ENCODE measurements at regions of chr7 and their contacts with region 1.

Region 1: GRCh38 chr7:157555313-157555712 is 218.5 kb downstream of the DNAJB6 start:
- DNase-seq: peak; percentile 94
- ATAC-seq: peak; percentile 97
- H3K4me3 ChIP-seq: peak overlapping the region; percentile 43; the same call in 1 of the 2 replicates
- H3K27ac ChIP-seq: peak overlapping the region; percentile 100
- H3K4me1 ChIP-seq: peaks cover 31% of the 10 kb centered on the region
- H3K27me3 ChIP-seq: no peaks in the 10 kb centered on the region
- CTCF ChIP-seq: no peak

Region 2: GRCh38 chr7:157432957-157433576 is 122.2 kb before region 1 on chr7:
- CTCF ChIA-PET with region 1: interaction called, 4 read pairs
- POLR2A ChIA-PET with region 1: interaction called, 6 read pairs
- intact Hi-C with region 1: loop called (anchors 2 kb)
- DNase-seq: peak; percentile 66
- ATAC-seq: peak; percentile 70
- H3K4me3 ChIP-seq: peak overlapping the region; percentile 47; the same call in 1 of the 2 replicates
- H3K27ac ChIP-seq: peak overlapping the region; percentile 62
- H3K4me1 ChIP-seq: peaks cover 9% of the 10 kb centered on the region; the same call in 1 of the 2 replicates
- H3K27me3 ChIP-seq: no peaks in the 10 kb centered on the region
- CTCF ChIP-seq: peak; percentile 88

Region 3: DNA sequence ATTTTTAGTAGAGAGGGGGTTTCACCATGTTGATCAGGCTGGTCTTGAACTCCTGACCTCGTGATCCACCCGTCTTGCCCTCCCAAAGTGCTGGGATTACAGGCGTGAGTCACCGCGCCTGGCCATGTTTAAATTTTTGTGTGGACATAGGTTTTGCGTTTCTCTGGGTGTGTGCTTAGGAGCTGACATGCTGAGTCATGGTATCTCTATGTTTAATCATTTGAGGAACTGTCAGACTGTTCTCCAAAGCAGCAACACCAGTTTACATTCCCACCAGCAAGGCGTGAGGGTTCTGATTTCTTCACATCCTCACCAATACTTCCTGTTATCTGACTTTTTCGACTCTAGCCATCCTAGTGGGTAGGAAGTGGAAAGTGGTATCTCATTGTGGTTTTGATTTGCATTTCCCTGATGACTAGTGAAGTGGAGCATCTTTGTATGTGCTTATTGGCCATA is 64.8 kb before region 1 on chr7:
- CTCF ChIA-PET with region 1: no interaction called
- POLR2A ChIA-PET with region 1: no interaction called
- intact Hi-C with region 1: loop called (anchors 1 kb)
- DNase-seq: peak; percentile 95
- ATAC-seq: peak; percentile 93
- H3K4me3 ChIP-seq: no peak overlapping the region
- H3K27ac ChIP-seq: peak overlapping the region; percentile 89
- H3K4me1 ChIP-seq: peaks cover 20% of the 10 kb centered on the region
- H3K27me3 ChIP-seq: no peaks in the 10 kb centered on the region
- CTCF ChIP-seq: no peak

Region 4: DNA sequence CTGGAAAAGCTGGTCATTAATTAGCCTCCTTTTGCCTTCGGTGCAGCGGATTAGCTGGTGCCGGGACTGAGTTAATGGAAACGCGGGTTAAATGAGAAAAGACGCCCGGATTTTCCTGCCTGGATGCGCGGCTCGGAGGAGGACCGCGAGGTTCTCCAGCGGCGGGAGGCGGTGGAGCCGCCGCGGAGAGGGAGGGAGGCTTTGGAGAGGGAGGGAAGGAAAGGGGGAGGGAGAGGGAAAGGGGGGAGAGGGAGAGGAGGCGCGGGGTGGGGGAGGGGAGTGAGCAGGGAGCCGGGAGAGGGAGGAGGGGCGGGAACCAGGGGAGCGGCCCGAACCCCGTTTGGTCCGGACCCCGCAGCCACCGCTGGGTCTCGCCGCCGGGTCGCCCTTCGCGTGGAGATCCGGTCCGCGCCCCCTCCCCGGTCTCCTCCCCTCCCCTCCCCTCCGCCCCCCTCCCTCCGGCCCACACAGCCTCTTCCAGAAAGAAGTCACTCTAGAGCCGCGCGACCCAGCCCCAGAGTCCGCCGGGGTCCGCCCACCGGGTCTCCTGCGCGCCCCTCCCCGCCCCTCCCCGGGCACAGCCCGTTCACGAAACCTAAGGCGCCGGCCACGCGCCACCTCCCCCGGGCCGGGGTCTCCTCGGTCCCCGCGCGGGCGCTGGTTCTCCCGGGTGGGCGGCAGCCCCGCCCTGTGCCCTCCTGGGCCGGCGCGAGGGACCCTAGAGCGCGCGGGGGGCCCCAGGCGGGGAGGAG is 129.0 kb after region 1 on chr7:
- CTCF ChIA-PET with region 1: no interaction called
- POLR2A ChIA-PET with region 1: no interaction called
- intact Hi-C with region 1: loop called (anchors 5 kb)
- DNase-seq: no peak
- ATAC-seq: no peak
- H3K4me3 ChIP-seq: no peak overlapping the region
- H3K27ac ChIP-seq: no peak overlapping the region
- H3K4me1 ChIP-seq: peaks cover 5% of the 10 kb centered on the region; the same call in 1 of the 2 replicates
- H3K27me3 ChIP-seq: no peaks in the 10 kb centered on the region
- CTCF ChIP-seq: no peak

Region 5: DNA sequence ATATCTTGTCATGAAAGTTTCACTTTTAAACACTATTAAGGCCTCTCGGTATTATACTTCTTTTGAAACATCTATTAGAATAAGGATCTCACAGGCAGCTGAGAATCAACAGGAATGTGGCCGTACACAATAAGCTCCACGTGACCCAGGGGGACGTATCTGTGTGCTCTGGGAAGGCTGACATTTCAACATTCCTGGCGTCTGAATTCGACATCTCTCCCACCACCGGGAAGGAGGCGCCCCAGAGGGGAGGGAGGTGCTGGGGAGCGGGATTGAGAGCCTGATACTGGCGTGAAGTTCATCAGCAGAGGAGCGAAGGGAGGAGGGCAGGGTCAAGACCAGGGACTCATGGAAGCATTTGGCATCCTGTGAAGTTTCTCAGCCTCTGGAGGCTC is 182.8 kb after region 1 on chr7:
- CTCF ChIA-PET with region 1: no interaction called
- POLR2A ChIA-PET with region 1: no interaction called
- intact Hi-C with region 1: no loop called
- DNase-seq: no peak
- ATAC-seq: no peak
- H3K4me3 ChIP-seq: no peak overlapping the region
- H3K27ac ChIP-seq: no peak overlapping the region
- H3K4me1 ChIP-seq: no peaks in the 10 kb centered on the region
- H3K27me3 ChIP-seq: peaks cover 74% of the 10 kb centered on the region
- CTCF ChIP-seq: no peak

Measured in PC-3 (cell line).